Head of caudate nucleus (tissue), 42 donors: ENCODE measurements at regions of chr13 and their contacts with region 1.

Region 1: GRCh38 chr13:102452831-102453230 is 51.0 kb upstream of the FGF14 start:
- DNase-seq: no peak

Region 2: DNA sequence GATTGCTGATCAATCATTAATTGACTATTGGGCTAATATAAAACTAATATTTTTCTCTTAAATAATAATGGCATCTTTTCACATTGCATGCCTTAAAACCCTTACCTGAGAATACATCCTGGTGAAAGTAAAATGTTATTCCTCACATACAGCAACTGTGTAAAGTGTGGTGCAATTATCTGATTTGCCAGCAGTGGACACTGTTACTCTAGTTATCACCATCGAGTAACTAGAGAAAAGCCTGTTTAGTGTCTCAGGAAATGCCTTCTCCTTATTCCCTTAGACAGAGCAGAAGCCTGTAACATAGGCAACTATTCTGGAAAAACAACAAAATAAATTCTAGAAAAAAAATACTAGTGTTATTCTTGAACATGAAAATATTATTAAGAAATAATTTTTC is 510.8 kb before region 1 on chr13:
- intact Hi-C with region 1: loop called (anchors 10 kb)
- DNase-seq: peak in 16 of 42 donors; percentile 12 to 64 (median 31)

Region 3: GRCh38 chr13:102244607-102245227 is 208.1 kb before region 1 on chr13:
- intact Hi-C with region 1: no loop called
- DNase-seq: peak in 1 of 42 donors; percentile 27

Region 4: GRCh38 chr13:102317593-102317992 is 135.2 kb before region 1 on chr13:
- intact Hi-C with region 1: no loop called
- DNase-seq: peak in 22 of 42 donors; percentile 8 to 58 (median 28)